Naive thymus-derived CD4-positive, alpha-beta T cell (primary cell): ENCODE measurements at regions of chr9 and their contacts with region 1.

Region 1: GRCh38 chr9:34328987-34329832 is at the starts of genes KIF24 and NUDT2:
- DNase-seq: peak; percentile 89 to 99 (median 96)
- ATAC-seq: peak; percentile 95
- H3K4me3 ChIP-seq: peak within 1 kb of the TSS; percentile 98
- H3K4me3 Mint-ChIP-seq: peak within 1 kb of the TSS; percentile 88 to 97 (median 94)
- H3K27ac ChIP-seq: peak within 1 kb of the TSS; percentile 94
- H3K27ac Mint-ChIP-seq: peak within 1 kb of the TSS; percentile 77 to 98 (median 95)
- H3K4me1 ChIP-seq: peaks cover 3 to 8% of the 10 kb centered on the region in 2 donors
- H3K4me1 Mint-ChIP-seq: peaks cover 11 to 45% (median 29%) of the 10 kb centered on the region in 7 donors
- H3K27me3 ChIP-seq: no peaks in the 10 kb centered on the region
- H3K27me3 Mint-ChIP-seq: no peaks in the 10 kb centered on the region
- total RNA-seq, gene KIF24: 0.11 to 6.0 (median 0.35) TPM
- total RNA-seq, gene NUDT2: 7.5 to 30.0 (median 22.7) TPM

Region 2: GRCh38 chr9:33473643-33474352 is 855.4 kb before region 1 on chr9 and contains the start of gene NOL6:
- CTCF ChIA-PET with region 1: no interaction called
- POLR2A ChIA-PET with region 1: no interaction called
- intact Hi-C with region 1: loop called in 1 of 2 experiments (anchors 2 kb)
- DNase-seq: peak; percentile 91 to 99 (median 98)
- ATAC-seq: peak; percentile 100
- H3K4me3 ChIP-seq: peak within 1 kb of the TSS; percentile 88
- H3K4me3 Mint-ChIP-seq: peak within 1 kb of the TSS; percentile 88 to 100 (median 97)
- H3K27ac ChIP-seq: peak within 1 kb of the TSS; percentile 78
- H3K27ac Mint-ChIP-seq: peak within 1 kb of the TSS; percentile 88 to 99 (median 96)
- H3K4me1 ChIP-seq: peaks cover 13 to 19% of the 10 kb centered on the region in 2 donors
- H3K4me1 Mint-ChIP-seq: peaks cover 9 to 38% (median 31%) of the 10 kb centered on the region in 7 donors
- H3K27me3 ChIP-seq: no peaks in the 10 kb centered on the region
- H3K27me3 Mint-ChIP-seq: no peaks in the 10 kb centered on the region
- total RNA-seq, gene NOL6: 34.0 to 48.0 (median 44.0) TPM

Region 3: DNA sequence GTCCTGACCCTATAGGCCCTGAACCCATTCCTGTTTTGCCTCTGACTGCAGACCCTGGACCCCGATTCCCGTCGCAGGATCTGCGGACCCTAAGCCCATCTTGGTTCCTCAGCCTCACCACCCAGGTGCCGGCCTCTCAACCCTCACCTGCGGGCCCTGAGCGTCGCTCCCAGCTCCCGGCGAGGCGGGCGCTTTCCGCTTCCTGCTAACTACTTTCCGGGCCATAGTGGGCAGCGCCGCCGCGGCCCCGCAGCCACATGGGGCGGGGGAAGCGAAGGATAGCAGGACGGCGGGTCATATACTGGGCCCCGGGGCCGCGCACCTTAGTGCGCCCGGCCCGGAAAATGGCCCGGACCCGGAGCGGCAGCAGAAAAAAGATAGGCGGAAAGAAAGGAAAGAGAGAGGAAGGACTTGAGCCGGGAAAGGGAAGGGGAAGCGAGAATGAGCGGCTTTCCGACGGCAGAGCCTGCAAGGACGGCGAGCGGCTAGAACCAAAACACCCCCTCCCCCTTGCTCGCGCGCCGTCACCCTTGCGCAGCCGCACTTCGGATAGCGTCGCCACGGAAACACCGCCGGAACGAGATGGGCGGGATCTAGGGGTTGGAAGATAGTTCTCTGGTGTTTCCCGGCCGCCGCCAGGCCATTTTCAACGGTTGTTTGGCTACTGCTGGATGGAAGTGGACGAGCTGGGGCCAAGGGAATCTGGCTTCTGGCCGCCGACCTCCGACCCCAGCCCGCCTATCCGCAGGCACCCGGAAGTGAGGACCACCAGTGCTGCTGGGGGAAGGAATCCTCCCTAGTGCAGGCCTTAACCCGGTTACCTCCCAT is 202.8 kb before region 1 on chr9 and contains the start of gene DCAF12:
- CTCF ChIA-PET with region 1: interaction called, 8 read pairs
- POLR2A ChIA-PET with region 1: no interaction called
- intact Hi-C with region 1: loop called (anchors 1 to 2 kb)
- DNase-seq: peak; percentile 84 to 92 (median 89)
- ATAC-seq: peak; percentile 96
- H3K4me3 ChIP-seq: peak within 1 kb of the TSS; percentile 92
- H3K4me3 Mint-ChIP-seq: peak within 1 kb of the TSS; percentile 92 to 99 (median 98)
- H3K27ac ChIP-seq: peak within 1 kb of the TSS; percentile 93
- H3K27ac Mint-ChIP-seq: peak within 1 kb of the TSS; percentile 94 to 99 (median 98)
- H3K4me1 ChIP-seq: peaks cover 24 to 34% of the 10 kb centered on the region in 2 donors
- H3K4me1 Mint-ChIP-seq: peaks cover 39 to 56% (median 44%) of the 10 kb centered on the region in 7 donors
- H3K27me3 ChIP-seq: no peaks in the 10 kb centered on the region
- H3K27me3 Mint-ChIP-seq: peaks cover 0 to 2% (median 0%) of the 10 kb centered on the region in 5 donors
- total RNA-seq, gene DCAF12: 10.8 to 40.4 (median 28.5) TPM

Region 4: GRCh38 chr9:34252670-34253459 is 76.3 kb before region 1 on chr9:
- CTCF ChIA-PET with region 1: interaction called, 4 read pairs
- POLR2A ChIA-PET with region 1: no interaction called
- intact Hi-C with region 1: loop called (anchors 2 kb)
- DNase-seq: peak; percentile 38 to 70 (median 56)
- ATAC-seq: peak; percentile 85
- H3K4me3 ChIP-seq: no peak overlapping the region
- H3K4me3 Mint-ChIP-seq: no peak overlapping the region
- H3K27ac ChIP-seq: no peak overlapping the region
- H3K27ac Mint-ChIP-seq: peak overlapping the region in 7 of 9 donors; percentile 15 to 69 (median 46)
- H3K4me1 ChIP-seq: peaks cover 0 to 6% of the 10 kb centered on the region in 2 donors
- H3K4me1 Mint-ChIP-seq: peaks cover 9 to 21% (median 17%) of the 10 kb centered on the region in 7 donors
- H3K27me3 ChIP-seq: no peaks in the 10 kb centered on the region
- H3K27me3 Mint-ChIP-seq: no peaks in the 10 kb centered on the region

Region 5: GRCh38 chr9:34522971-34523797 is 194.0 kb after region 1 on chr9 and contains the start of gene ENHO:
- CTCF ChIA-PET with region 1: no interaction called
- POLR2A ChIA-PET with region 1: no interaction called
- intact Hi-C with region 1: loop called (anchors 1 to 10 kb)
- DNase-seq: peak; percentile 77 to 97 (median 91)
- ATAC-seq: peak; percentile 97
- H3K4me3 ChIP-seq: peak within 1 kb of the TSS; percentile 66
- H3K4me3 Mint-ChIP-seq: peak within 1 kb of the TSS; percentile 70 to 83 (median 78)
- H3K27ac ChIP-seq: peak within 1 kb of the TSS; percentile 61
- H3K27ac Mint-ChIP-seq: peak within 1 kb of the TSS in 7 of 9 donors; percentile 18 to 79 (median 61)
- H3K4me1 ChIP-seq: peaks cover 7 to 10% of the 10 kb centered on the region in 2 donors
- H3K4me1 Mint-ChIP-seq: peaks cover 5 to 19% (median 10%) of the 10 kb centered on the region in 7 donors
- H3K27me3 ChIP-seq: no peaks in the 10 kb centered on the region
- H3K27me3 Mint-ChIP-seq: peaks cover 0 to 55% (median 8%) of the 10 kb centered on the region in 5 donors
- total RNA-seq, gene ENHO: 0.56 to 1.9 TPM in 2 of 5 experiments, not detected in the others

Region 6: GRCh38 chr9:34603610-34604231 is 274.5 kb after region 1 on chr9:
- CTCF ChIA-PET with region 1: interaction called, 5 read pairs
- POLR2A ChIA-PET with region 1: no interaction called
- intact Hi-C with region 1: loop called in 1 of 2 experiments (anchors 2 kb)
- DNase-seq: peak; percentile 53 to 78 (median 71)
- ATAC-seq: peak; percentile 92
- H3K4me3 ChIP-seq: no peak overlapping the region
- H3K4me3 Mint-ChIP-seq: no peak overlapping the region
- H3K27ac ChIP-seq: no peak overlapping the region
- H3K27ac Mint-ChIP-seq: no peak overlapping the region
- H3K4me1 ChIP-seq: no peaks in the 10 kb centered on the region
- H3K4me1 Mint-ChIP-seq: peaks cover 0 to 2% (median 0%) of the 10 kb centered on the region in 7 donors
- H3K27me3 ChIP-seq: no peaks in the 10 kb centered on the region
- H3K27me3 Mint-ChIP-seq: peaks cover 0 to 20% (median 5%) of the 10 kb centered on the region in 5 donors